Astrocyte of the cerebellum (primary cell): ENCODE measurements at regions of chr7 and their contacts with region 1.

Region 1: DNA sequence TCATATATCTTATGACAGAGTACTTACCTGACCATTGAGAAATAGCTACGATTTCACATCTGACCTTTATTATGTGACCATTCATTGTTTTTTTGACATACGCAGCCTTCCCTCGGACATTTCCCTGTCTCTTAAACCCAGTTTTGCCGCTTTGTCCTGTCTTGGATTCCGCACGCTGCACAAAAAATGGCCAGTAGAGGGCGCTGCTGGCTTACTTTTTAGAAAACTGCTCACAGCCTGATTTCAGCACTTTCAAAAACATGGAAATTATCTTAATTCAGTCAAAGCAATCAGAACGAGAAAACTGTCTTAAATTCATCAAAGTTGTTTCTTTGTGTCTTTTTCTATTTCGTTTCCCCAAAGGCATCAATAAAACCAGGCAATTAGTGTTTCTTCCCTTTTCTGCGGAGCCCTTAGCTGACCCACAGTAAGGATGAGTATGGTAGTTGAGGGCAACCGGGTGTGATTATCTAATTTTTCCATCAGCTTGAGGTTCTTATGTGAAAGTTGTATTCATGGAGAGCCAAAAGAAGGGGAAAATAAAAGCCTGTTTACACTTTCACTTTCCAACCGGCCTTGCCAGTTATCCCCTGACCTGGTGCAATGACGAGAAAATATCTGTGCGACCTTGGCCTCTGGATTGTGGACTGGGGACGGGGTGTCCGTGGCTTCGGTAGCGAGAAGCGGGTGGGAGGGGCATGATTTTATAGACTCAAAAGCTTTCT is 144.4 kb downstream of the DYNC1I1 start:
- DNase-seq: peak; percentile 53
- H3K4me3 ChIP-seq: no peak overlapping the region
- CTCF ChIP-seq: peak; percentile 89

Region 2: DNA sequence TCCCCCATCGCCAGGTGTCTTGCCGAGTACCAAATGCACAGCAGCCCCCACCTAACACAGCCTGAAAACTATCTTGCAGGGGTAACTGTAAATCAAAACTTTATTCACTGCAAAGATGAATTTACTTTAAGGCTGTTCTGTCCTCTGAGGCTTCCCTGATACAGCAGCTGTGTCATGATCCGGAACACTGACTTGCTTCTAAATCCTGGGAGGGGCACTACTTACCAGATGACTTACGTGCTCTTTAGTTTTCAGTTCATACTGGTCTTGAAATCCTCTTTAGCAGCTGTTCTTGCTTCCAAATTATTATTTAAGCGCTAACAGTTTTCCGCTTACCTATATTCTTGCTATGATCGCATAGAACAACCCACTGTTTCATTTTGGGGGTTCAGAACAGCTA is 139.5 kb before region 1 on chr7:
- in situ Hi-C with region 1: no loop called
- DNase-seq: no peak
- H3K4me3 ChIP-seq: no peak overlapping the region
- CTCF ChIP-seq: no peak

Region 3: DNA sequence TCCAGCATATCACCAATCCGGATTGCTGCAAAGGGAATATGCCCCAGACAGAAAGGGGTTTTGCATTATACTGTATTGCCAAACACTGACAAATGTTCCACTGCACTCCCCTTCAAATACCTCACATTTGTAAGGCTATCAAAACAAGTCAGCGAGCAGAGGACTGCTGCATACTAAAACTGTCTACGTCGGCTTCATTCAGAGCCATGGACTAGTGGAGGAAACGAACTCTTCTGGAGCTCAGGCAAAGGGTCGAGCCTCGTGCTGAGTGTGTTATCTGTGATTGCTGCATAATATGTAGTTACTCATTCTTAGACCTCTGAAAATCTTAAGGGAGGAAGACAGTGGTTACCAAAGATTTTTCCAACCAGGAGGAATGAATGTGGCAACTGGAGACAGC is 55.8 kb after region 1 on chr7:
- in situ Hi-C with region 1: no loop called
- DNase-seq: no peak
- H3K4me3 ChIP-seq: no peak overlapping the region
- CTCF ChIP-seq: no peak

Region 4: DNA sequence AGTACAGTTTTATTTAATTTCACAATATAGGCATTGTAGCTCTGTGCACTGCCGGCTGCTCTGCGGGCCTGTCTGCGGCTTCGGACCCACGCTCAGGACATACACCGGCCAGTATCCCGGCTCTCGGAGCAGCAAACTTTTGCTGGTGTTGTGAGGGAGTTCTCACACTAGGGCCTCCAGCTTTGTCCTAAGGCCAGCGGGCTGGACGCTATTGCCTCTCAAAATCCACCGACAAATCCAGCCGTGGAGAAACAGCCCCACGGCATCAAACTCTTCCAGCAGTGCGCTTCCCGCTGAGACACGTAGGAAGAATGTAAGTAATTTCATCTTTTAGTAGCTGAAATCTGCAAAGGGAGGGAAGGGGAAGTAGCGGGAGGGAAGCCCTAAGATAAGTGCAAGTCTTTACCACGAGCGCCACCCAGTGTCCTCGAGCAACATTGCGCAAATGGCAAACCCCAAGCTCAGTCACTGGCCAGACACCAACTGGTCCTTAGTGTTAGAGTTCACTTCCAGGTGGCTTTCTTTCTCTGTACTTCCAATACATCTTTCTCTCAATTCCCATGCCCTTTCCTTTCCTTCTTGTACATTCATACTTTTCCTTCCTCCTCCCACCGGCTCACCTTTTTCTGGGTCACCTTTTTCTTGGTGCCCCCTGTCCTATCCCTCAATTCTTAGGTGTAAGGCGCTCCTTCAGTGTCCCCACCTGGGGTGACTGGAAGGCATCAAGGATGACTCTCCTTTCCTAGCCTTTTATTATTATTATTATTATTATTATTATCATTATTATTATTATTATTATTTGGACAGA is 1110.9 kb after region 1 on chr7:
- in situ Hi-C with region 1: loop called (anchors 10 kb)
- DNase-seq: peak; percentile 74
- H3K4me3 ChIP-seq: peak overlapping the region; percentile 26
- CTCF ChIP-seq: peak; percentile 87